Activated naive CD4-positive, alpha-beta T cell treated with anti-CD3 and anti-CD28 coated beads for 36 hours (primary cell): ENCODE measurements at regions of chr18 and their contacts with region 1.

Region 1: DNA sequence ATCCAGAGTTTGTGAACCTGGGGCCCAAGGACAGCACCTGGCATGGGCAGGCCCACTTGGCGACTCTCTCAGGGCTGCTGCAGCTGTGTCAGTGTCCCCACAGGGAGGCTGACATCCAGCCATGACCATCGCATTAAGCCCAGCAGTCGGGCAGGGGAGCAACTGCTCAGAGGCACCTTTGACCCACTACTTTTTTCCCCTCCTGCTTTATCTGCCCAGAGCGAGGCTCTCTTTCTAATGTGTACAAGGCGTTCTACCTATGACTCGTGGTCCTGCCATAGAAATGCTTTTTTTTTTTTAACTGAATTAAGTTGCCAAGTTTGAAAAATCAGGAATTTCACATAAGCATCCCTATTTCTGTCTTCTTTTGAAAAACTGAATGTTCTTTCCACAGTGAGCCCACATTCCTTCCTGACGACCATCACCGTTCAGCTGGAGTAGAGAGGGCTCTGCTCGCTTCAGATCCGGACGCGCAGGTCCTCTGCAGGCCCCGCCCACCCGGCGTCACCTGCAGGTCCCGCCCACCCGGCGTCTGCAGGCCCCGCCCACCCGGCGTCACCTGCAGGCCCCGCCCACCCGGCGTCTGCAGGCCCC is 403 bp upstream of the CLUL1 start:
- DNase-seq: no peak
- H3K4me3 Mint-ChIP-seq: no peak overlapping the region
- H3K27ac Mint-ChIP-seq: no peak overlapping the region
- H3K4me1 Mint-ChIP-seq: peaks cover 4% of the 10 kb centered on the region
- H3K27me3 Mint-ChIP-seq: peaks cover 17% of the 10 kb centered on the region

Region 2: GRCh38 chr18:158128-159036 is 438.0 kb before region 1 on chr18 and contains the start of gene USP14:
- CTCF ChIA-PET with region 1: no interaction called
- intact Hi-C with region 1: loop called (anchors 2 kb)
- DNase-seq: peak; percentile 99
- H3K4me3 Mint-ChIP-seq: peak within 1 kb of the TSS; percentile 85
- H3K27ac Mint-ChIP-seq: peak within 1 kb of the TSS; percentile 92
- H3K4me1 Mint-ChIP-seq: peaks cover 37% of the 10 kb centered on the region
- H3K27me3 Mint-ChIP-seq: no peaks in the 10 kb centered on the region
- total RNA-seq, gene USP14: 90.0 to 96.6 TPM

Region 3: DNA sequence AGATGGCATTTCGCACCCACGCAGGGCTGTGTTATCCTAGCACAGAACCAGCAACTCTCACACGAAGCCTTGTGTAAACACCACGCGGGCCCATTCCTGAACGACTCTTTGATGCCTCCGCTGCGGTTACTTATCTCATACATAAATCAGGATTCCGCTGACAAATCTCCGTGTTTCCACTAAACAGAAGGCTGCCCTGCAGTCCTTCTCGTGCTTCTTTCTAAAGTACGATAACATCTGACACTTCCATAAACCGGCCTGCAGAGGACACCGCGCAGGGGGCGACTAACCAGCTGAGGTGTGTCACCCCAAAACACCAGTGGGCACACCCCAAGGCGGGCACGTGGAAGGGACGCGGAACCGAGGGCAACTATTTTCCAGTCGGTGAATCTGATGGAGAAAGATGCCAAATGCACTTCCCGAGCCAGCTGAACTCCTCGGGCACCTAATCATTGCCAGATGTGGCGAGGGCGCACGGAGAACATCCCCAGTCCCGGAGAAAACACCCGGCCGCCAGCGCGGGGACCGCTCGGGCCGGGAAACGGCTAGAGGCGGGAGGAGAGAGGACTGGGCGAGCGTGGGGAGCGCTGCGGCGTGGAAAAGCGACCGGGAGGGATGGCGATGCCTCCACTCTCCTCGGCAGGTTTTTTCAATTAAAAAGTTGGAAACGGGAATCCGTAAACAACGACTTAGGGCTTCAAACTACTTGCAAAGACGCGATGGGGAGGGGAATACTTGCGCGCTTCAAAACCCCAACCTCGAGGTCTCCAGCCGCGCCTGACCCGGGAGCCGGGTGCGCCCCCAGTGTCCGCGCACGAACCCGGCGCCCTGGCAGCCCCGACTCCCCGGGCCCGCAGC is 96.6 kb before region 1 on chr18:
- CTCF ChIA-PET with region 1: no interaction called
- intact Hi-C with region 1: loop called (anchors 10 kb)
- DNase-seq: no peak
- H3K4me3 Mint-ChIP-seq: no peak overlapping the region
- H3K27ac Mint-ChIP-seq: no peak overlapping the region
- H3K4me1 Mint-ChIP-seq: peaks cover 9% of the 10 kb centered on the region
- H3K27me3 Mint-ChIP-seq: peaks cover 38% of the 10 kb centered on the region

Region 4: GRCh38 chr18:658001-658946 is 61.9 kb after region 1 on chr18:
- CTCF ChIA-PET with region 1: no interaction called
- intact Hi-C with region 1: loop called (anchors 1 kb)
- DNase-seq: peak; percentile 88
- H3K4me3 Mint-ChIP-seq: peak overlapping the region; percentile 93
- H3K27ac Mint-ChIP-seq: peak overlapping the region; percentile 87
- H3K4me1 Mint-ChIP-seq: peaks cover 14% of the 10 kb centered on the region
- H3K27me3 Mint-ChIP-seq: peaks cover 29% of the 10 kb centered on the region